Activated CD8-positive, alpha-beta T cell treated with anti-CD3 and anti-CD28 coated beads, Interleukin-2, amount 10 ng/mL, durations not matched to agents 7 days and 5 days (primary cell): ENCODE measurements at regions of chr1 and their contacts with region 1.

Region 1: DNA sequence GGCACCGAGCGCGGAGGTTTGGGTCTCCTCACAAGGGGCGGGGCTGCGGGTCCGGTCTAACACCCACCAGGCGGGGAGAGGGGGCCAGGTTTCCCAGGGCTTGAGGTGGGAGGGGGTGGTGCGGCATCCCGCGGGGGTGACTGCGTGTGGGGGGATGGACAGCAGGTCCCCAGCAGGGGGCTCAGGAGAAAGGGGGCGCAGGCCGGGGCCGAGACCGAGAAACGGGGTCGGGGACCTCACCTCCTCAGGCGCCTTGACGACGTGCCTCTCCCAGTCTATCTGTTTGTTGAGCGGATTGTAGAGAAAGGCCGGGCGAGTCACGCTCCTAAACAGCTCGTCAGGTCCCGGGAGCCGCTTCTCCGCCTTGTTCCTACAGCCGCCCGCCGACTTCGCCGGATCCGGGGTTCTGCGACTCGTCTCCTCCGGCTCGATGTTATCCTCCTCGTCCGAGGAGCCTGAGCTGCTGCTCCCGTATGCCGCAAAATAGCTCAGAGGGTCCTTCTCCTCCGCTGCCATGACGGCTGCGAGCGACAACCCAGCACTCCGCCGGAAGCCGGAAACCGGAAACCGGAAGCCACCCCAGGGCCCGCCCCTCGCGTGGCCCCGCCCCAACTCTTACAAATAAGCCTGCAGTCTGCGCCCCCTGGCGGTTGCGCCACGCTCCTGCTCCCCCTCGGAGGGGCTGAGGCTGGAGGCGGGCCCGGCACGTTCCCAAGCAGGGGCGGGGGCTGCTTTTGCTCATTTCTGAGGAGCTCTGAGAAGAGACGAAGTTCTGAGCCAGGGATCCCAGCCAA is at the start of gene C1orf52:
- DNase-seq: peak; percentile 98
- ATAC-seq: peak; percentile 92
- H3K4me3 Mint-ChIP-seq: peak within 1 kb of the TSS; percentile 95
- H3K27ac Mint-ChIP-seq: peak within 1 kb of the TSS; percentile 97
- H3K4me1 Mint-ChIP-seq: peaks cover 32% of the 10 kb centered on the region
- H3K27me3 Mint-ChIP-seq: no peaks in the 10 kb centered on the region
- total RNA-seq, gene C1orf52: 25.5 to 29.5 TPM

Region 2: GRCh38 chr1:84959294-84959693 is 300.0 kb before region 1 on chr1:
- CTCF ChIA-PET with region 1: interaction called, 17 read pairs
- POLR2A ChIA-PET with region 1: no interaction called
- DNase-seq: peak; percentile 32
- ATAC-seq: peak; percentile 89
- H3K4me3 Mint-ChIP-seq: no peak overlapping the region
- H3K27ac Mint-ChIP-seq: no peak overlapping the region
- H3K4me1 Mint-ChIP-seq: peaks cover 11% of the 10 kb centered on the region
- H3K27me3 Mint-ChIP-seq: no peaks in the 10 kb centered on the region

Region 3: DNA sequence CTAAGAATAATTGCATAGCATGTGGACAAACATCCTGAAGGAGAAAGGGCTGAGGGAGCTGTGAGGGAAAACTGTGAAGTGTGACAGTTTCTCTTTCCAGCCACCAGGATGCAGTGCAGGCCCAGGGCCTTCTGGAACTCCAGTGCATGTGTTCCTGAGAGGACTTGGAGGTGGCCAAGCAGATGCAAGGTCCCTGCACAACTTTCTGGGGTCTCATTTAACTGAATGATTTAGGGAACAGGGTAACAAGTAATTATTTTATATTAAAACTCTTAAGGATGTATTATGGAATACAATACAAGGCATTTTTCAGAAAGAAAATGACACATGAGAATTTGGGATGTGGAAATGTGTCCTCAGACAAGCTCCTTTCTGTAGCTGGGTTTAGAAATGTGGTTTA is 149.8 kb before region 1 on chr1:
- CTCF ChIA-PET with region 1: interaction called, 71 read pairs
- POLR2A ChIA-PET with region 1: interaction called, 3 read pairs
- DNase-seq: peak; percentile 48
- ATAC-seq: peak; percentile 85
- H3K4me3 Mint-ChIP-seq: no peak overlapping the region
- H3K27ac Mint-ChIP-seq: no peak overlapping the region
- H3K4me1 Mint-ChIP-seq: no peaks in the 10 kb centered on the region
- H3K27me3 Mint-ChIP-seq: peaks cover 16% of the 10 kb centered on the region

Region 4: GRCh38 chr1:85240174-85240601 is 19.1 kb before region 1 on chr1:
- CTCF ChIA-PET with region 1: interaction called, 46 read pairs
- POLR2A ChIA-PET with region 1: interaction called, 10 read pairs
- DNase-seq: peak; percentile 31
- ATAC-seq: no peak
- H3K4me3 Mint-ChIP-seq: no peak overlapping the region
- H3K27ac Mint-ChIP-seq: peak overlapping the region; percentile 61
- H3K4me1 Mint-ChIP-seq: peaks cover 22% of the 10 kb centered on the region
- H3K27me3 Mint-ChIP-seq: peaks cover 5% of the 10 kb centered on the region